Activated CD4-positive, alpha-beta memory T cell treated with anti-CD3 and anti-CD28 coated beads for 36 hours (primary cell): ENCODE measurements at regions of chr18 and their contacts with region 1.

Region 1: GRCh38 chr18:50287441-50288347 is at the start of gene CXXC1:
- DNase-seq: peak; percentile 98
- H3K4me3 Mint-ChIP-seq: peak within 1 kb of the TSS; percentile 88
- H3K27ac Mint-ChIP-seq: peak within 1 kb of the TSS; percentile 100
- H3K4me1 Mint-ChIP-seq: peaks cover 28% of the 10 kb centered on the region
- H3K27me3 Mint-ChIP-seq: no peaks in the 10 kb centered on the region
- total RNA-seq, gene CXXC1: 80.8 to 80.9 TPM

Region 2: DNA sequence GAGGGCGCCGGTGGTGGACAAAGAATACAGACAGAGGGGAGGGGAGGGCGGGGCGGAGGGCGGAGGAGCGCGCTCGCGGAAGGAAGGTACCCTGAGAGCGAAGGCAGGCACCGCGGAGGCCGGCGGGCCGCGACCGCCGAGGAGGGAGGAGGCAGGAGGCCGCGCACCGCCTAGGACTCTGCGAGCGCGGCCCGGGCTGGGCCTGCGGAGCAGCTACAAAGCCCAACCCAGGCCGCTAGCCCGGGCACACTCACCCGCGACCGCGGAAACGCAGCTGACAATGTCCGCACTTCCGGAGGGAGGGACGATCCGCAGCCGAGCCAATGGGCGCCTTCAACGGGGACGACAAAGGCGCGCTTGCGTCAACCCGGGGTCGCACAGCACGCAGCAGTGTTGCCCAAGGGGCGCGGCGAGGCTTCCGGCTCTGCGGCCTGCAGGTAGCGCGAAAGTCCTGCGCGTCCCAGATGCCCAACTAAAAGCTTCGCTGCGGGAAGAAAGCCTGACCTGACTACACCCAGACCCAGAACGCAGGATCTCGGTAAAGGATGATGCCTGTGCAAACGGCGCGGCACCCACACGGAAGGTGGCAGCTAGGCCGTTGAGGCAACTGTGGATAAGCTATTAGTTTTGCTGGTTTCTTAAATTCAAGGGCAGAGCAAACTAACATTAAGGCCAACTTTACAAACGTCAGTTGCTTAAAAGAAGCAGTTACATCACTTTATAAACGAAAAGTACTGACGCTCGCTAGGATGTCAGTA is 800.6 kb before region 1 on chr18 and contains the start of gene C18orf32:
- CTCF ChIA-PET with region 1: no interaction called
- POLR2A ChIA-PET with region 1: no interaction called
- intact Hi-C with region 1: loop called (anchors 1 kb)
- DNase-seq: peak; percentile 96
- H3K4me3 Mint-ChIP-seq: peak within 1 kb of the TSS; percentile 97
- H3K27ac Mint-ChIP-seq: peak within 1 kb of the TSS; percentile 97
- H3K4me1 Mint-ChIP-seq: peaks cover 59% of the 10 kb centered on the region
- H3K27me3 Mint-ChIP-seq: no peaks in the 10 kb centered on the region
- total RNA-seq, gene C18orf32: 26.5 to 27.5 TPM

Region 3: DNA sequence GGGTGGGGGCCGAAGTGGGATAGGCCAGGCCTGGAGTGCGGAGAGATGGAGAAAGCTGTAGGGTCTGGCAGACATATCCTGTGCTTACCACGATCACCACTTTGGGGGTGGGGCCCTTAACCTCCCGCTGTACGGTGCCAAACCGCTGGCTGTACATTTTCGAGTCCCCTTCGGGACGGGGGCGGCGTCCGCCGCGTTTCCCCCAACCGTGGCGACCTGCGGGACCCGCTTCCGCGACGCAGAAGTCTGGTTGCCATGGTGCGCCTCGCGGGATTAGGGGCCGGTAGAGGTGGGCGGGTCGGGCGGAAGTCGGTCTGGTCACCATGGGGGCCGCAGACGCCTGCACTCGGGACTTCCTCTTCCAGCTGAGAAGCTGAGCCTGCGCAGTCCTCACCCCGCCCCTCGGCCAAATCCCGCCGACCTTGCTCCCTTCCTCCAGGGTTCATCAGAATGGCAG is 21.4 kb before region 1 on chr18 and contains the start of gene CFAP53:
- CTCF ChIA-PET with region 1: interaction called, 4 read pairs
- POLR2A ChIA-PET with region 1: no interaction called
- intact Hi-C with region 1: loop called (anchors 1 kb)
- DNase-seq: peak; percentile 93
- H3K4me3 Mint-ChIP-seq: peak within 1 kb of the TSS; percentile 79
- H3K27ac Mint-ChIP-seq: peak within 1 kb of the TSS; percentile 43
- H3K4me1 Mint-ChIP-seq: peaks cover 18% of the 10 kb centered on the region
- H3K27me3 Mint-ChIP-seq: no peaks in the 10 kb centered on the region
- total RNA-seq, gene CFAP53: 0.26 to 0.48 TPM

Region 4: DNA sequence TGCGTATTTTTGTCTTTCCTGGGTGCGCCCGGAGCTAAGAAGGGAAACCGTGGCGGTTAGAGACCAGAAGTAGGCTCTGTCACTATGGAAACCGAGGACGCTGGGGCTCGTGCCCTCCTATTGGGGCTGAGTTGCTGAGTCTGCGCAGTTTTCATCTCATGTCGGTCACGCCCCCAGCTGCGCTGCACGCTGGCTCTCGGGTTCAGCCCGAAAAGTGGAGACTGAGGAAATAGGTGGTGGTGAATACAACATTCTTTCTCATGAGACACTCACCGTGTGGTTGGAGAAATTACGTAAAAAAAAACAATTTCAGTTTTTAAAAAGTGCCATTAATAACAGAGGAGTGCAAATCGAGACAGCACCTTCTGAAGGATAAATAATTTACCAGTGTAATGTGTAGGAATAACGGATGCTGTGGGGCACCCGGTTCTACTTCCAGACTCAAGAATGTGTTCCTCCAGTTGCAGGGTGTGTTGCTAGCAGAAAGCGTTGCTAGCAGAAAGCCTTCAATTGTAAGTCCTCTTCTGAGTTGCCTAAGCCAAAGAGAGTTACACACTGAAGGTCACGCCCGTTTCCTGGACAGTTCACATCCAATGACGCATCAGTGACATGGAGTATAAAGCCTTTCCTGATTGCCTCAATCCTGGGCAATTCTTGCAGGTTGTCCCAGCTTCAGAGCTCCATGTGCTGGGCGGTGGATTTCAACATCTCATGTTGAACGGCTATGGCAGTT is 20.2 kb after region 1 on chr18:
- CTCF ChIA-PET with region 1: no interaction called
- POLR2A ChIA-PET with region 1: no interaction called
- intact Hi-C with region 1: loop called (anchors 1 kb)
- DNase-seq: peak; percentile 93
- H3K4me3 Mint-ChIP-seq: peak overlapping the region; percentile 83
- H3K27ac Mint-ChIP-seq: no peak overlapping the region
- H3K4me1 Mint-ChIP-seq: peaks cover 4% of the 10 kb centered on the region
- H3K27me3 Mint-ChIP-seq: peaks cover 7% of the 10 kb centered on the region